Vagina (tissue), 2 donors: ENCODE measurements at regions of chr15 and their contacts with region 1.

Region 1: GRCh38 chr15:31326156-31326732 is 391 bp upstream of the KLF13 start:
- DNase-seq: peak in 1 of 2 donors; percentile 99
- H3K4me3 ChIP-seq: peak overlapping the region; percentile 56 to 77
- H3K27ac ChIP-seq: peak overlapping the region; percentile 90
- H3K4me1 ChIP-seq: peaks cover 39% of the 10 kb centered on the region
- H3K27me3 ChIP-seq: no peaks in the 10 kb centered on the region
- CTCF ChIP-seq: no peak
- POLR2A ChIP-seq: peak in 1 of 2 donors; percentile 99

Region 2: GRCh38 chr15:31215490-31216214 is 110.6 kb before region 1 on chr15:
- intact Hi-C with region 1: loop called (anchors 1 kb)
- DNase-seq: no peak
- H3K4me3 ChIP-seq: peak overlapping the region; percentile 54 to 73
- H3K27ac ChIP-seq: peak overlapping the region; percentile 96
- H3K4me1 ChIP-seq: peaks cover 34% of the 10 kb centered on the region
- H3K27me3 ChIP-seq: no peaks in the 10 kb centered on the region
- CTCF ChIP-seq: peak; percentile 36 to 87 (median 81)
- POLR2A ChIP-seq: no peak

Region 3: DNA sequence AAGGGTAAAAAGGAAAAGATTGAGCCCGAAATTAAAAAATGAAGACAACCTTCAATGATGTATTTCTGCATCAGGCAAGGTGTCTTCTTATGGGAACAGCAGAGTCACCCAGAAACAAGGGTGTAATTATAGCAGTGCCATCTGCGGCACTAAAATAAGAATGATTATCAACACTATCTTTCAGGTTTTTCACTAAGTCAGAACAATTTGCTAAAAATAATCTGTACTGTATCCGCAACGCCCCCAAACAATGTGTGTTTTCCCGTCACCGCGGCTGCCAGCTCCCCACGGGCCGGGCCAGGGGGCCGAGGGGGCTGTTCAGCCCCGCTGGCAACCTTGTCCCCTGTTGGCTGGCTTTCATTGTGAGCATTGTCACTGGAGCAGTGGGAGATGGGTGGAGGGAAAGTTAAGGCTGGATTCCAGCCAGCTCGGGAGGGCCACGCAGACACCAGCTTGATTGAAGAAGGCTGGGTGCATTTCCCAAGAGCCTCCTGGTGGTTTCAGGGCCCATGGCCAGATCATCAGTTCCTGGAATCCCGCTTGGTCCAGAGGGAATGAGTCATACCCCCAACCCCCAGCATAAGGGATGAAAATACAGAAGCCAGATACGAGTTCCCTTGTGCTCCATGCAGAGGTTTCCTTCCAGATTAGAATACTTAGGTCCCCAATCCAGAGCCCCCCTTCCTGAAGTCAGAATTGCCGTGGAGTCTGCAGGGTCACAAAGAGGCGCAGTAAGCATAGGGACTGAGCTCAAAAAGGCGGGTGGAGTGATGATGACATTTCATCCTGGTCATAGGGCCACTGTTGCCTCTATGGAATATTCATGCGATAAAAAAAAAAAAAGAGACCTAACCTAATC is 89.8 kb before region 1 on chr15:
- intact Hi-C with region 1: loop called (anchors 5 kb)
- DNase-seq: peak in 1 of 2 donors; percentile 93
- H3K4me3 ChIP-seq: peak overlapping the region in 1 of 2 donors; percentile 39
- H3K27ac ChIP-seq: peak overlapping the region; percentile 71
- H3K4me1 ChIP-seq: peaks cover 18% of the 10 kb centered on the region
- H3K27me3 ChIP-seq: no peaks in the 10 kb centered on the region
- CTCF ChIP-seq: no peak
- POLR2A ChIP-seq: no peak

Region 4: GRCh38 chr15:31262901-31263671 is 63.2 kb before region 1 on chr15:
- intact Hi-C with region 1: no loop called
- DNase-seq: peak; percentile 80 to 93
- H3K4me3 ChIP-seq: no peak overlapping the region
- H3K27ac ChIP-seq: no peak overlapping the region
- H3K4me1 ChIP-seq: peaks cover 34% of the 10 kb centered on the region
- H3K27me3 ChIP-seq: no peaks in the 10 kb centered on the region
- CTCF ChIP-seq: no peak
- POLR2A ChIP-seq: no peak

Region 5: GRCh38 chr15:31365655-31366127 is 39.4 kb after region 1 on chr15:
- intact Hi-C with region 1: loop called (anchors 2 kb)
- DNase-seq: peak in 1 of 2 donors; percentile 98
- H3K4me3 ChIP-seq: peak overlapping the region; percentile 35 to 51
- H3K27ac ChIP-seq: peak overlapping the region; percentile 95
- H3K4me1 ChIP-seq: peaks cover 97% of the 10 kb centered on the region
- H3K27me3 ChIP-seq: no peaks in the 10 kb centered on the region
- CTCF ChIP-seq: peak in 1 of 3 experiments; percentile 35
- POLR2A ChIP-seq: no peak

Region 6: DNA sequence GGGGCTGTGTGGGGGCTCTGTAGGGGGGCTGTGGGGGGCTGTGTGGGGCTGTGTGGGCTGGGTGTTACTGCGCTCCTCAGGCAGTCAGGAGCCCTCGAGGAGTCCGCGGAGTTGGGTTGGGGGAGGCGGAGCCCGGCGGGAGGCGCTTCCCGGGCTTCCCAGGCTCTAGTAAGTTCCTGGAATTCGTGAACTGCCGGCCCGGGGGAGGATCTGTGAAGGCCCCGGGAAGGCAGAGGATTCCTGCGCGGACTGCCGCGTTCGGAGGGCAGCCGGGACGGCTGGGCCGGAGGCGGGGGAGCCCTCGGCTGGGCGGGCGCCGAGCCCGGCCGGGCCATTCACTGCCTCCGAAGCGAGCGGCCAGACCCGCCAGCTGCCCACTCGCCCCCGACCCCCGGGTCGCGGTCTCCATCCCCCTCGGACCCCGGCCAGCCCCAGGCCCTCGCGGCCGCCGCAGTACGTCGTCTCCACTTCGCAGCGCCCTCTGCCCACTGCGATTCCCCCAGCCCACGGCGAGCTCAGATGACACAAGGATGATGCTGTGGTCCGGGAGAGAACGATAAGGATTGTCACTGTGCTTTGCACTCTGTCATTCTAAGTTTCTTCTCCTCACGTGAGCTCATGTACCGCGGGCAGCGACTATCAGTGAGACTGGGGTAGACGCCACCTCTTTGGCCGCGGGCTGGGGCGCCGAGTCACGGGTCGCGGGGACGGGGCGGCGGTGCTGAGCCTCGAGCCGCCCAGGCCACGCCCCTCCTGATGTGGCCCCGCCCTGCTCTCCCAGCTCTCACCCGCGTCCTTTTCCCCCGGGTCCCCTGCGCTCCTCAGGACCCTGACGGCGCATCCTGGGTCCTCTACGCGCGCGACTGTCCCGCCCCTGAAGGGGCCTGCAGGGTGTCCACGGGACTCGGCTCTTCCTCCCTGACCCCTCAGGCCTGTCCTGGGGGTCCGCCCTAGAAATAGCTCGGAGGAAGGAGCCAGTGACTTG is 65.7 kb after region 1 on chr15:
- intact Hi-C with region 1: loop called (anchors 1 kb)
- DNase-seq: peak; percentile 70 to 89
- H3K4me3 ChIP-seq: peak overlapping the region; percentile 56 to 82
- H3K27ac ChIP-seq: peak overlapping the region; percentile 93
- H3K4me1 ChIP-seq: peaks cover 35% of the 10 kb centered on the region
- H3K27me3 ChIP-seq: no peaks in the 10 kb centered on the region
- CTCF ChIP-seq: no peak
- POLR2A ChIP-seq: peak in 1 of 2 donors; percentile 96

Region 7: GRCh38 chr15:31488426-31489204 is 162.4 kb after region 1 on chr15:
- intact Hi-C with region 1: loop called (anchors 10 kb)
- DNase-seq: peak; percentile 92 to 93
- H3K4me3 ChIP-seq: no peak overlapping the region
- H3K27ac ChIP-seq: peak overlapping the region; percentile 86
- H3K4me1 ChIP-seq: peaks cover 38% of the 10 kb centered on the region
- H3K27me3 ChIP-seq: no peaks in the 10 kb centered on the region
- CTCF ChIP-seq: peak; percentile 79 to 99 (median 97)
- POLR2A ChIP-seq: no peak

Region 8: GRCh38 chr15:31526916-31527690 is 200.9 kb after region 1 on chr15:
- intact Hi-C with region 1: no loop called
- DNase-seq: no peak
- H3K4me3 ChIP-seq: peak overlapping the region in 1 of 2 donors; percentile 0
- H3K27ac ChIP-seq: no peak overlapping the region
- H3K4me1 ChIP-seq: no peaks in the 10 kb centered on the region
- H3K27me3 ChIP-seq: no peaks in the 10 kb centered on the region
- CTCF ChIP-seq: no peak
- POLR2A ChIP-seq: no peak